CD4-positive, alpha-beta T cell (primary cell): ENCODE measurements at regions of chr6 and their contacts with region 1.

Region 1: DNA sequence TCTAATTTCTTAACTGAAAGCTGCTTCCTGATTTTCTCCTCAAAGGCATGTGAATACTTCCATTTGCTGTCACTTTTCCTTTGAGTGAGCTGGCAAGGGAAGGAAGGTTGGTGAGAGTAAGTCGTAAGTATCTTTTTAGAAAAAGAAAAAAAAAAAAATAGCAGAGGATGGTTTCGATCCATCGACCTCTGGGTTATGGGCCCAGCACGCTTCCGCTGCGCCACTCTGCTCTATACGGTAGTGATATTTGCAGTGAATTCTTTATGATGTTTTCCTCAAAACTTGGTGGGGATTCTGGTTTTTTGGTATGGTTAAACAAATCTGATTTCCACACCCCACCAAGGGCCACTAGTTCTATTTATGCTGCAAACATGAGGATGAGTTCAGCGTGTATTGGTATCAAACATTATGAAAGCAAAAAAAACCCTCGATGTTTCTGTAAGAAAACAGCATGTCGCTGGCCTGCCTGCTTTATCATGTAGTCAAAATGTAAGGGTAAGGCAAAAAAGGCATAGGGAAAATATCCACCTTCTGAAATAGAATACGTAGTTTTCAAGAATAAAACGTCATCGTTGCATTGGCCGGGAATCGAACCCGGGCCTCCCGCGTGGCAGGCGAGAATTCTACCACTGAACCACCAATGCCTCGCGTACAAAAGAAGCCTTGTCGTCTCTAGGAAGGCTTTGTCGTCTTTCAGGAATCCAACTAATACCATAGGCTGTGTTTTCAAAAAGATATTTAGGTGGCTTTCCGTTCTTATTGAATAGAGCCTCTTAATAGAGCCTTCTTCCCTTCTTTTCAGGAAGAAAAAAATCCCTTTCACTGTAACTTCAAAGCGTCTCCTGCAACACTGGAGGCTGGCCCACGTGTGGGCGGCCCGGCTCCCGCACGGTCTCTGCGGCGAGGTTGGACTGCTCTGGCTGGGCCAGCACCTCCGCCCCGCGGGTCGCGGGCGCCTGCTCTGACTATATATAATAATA is 9.6 kb downstream of the OR2B2 start:
- DNase-seq: peak; percentile 78 to 95 (median 88)
- ATAC-seq: peak; percentile 86
- H3K4me3 ChIP-seq: peak overlapping the region; percentile 60
- H3K4me3 Mint-ChIP-seq: peak overlapping the region; percentile 98
- H3K27ac ChIP-seq: peak overlapping the region; percentile 71 to 72
- H3K27ac Mint-ChIP-seq: peak overlapping the region; percentile 100
- H3K4me1 ChIP-seq: peaks cover 7% of the 10 kb centered on the region
- H3K4me1 Mint-ChIP-seq: peaks cover 16% of the 10 kb centered on the region
- H3K27me3 ChIP-seq: no peaks in the 10 kb centered on the region
- H3K27me3 Mint-ChIP-seq: peaks cover 23% of the 10 kb centered on the region
- CTCF ChIP-seq: no peak

Region 2: DNA sequence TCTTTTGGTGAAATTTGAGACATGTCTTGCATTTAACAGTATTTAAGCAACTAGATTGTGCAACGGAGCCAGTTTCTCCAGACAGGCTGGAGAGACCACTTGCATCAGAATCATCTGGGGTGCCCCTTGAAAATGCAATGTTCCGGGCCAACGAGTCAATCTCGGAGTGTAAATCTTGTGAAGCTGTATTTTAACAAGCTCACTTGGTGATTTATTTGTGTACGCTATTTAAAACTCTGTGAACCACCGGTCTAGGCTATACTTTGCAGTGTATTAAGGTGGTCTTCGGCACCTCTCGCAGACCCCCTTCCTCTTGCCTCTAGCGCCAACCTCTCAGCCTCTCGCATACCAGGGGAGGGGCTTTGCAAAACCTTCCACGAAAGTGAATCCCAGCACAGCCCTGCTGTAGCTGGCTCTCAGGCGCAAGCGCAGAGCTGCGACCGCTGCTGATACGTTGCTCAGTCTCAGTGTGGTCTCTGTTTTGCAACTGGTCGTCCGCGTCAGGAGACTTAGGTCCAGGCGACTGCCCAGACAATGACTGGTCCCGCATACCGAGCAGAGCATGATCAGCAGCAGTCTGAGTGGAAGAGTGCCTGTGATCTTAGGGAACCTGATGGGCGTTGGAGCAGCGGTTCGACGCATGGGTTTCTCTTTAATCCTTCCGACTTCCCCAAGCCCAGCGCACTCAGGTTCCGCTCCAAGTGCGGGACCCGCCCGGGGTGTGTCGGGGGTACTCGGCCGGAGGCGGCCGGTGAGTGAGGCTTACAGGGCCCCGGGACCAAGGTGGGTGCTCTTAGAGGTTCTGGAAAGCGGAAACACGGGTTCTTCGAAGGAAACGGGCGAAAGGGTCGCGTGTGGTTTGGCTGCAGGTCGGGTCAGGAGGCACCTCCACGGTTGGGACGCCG is 514.1 kb before region 1 on chr6 and contains the start of gene ZNF391:
- CTCF ChIA-PET with region 1: no interaction called
- POLR2A ChIA-PET with region 1: no interaction called
- intact Hi-C with region 1: loop called in 1 of 2 experiments (anchors 5 kb)
- DNase-seq: peak; percentile 41 to 80 (median 58)
- ATAC-seq: peak; percentile 87
- H3K4me3 ChIP-seq: peak within 1 kb of the TSS; percentile 78
- H3K4me3 Mint-ChIP-seq: peak within 1 kb of the TSS; percentile 98
- H3K27ac ChIP-seq: no peak within 1 kb of the TSS
- H3K27ac Mint-ChIP-seq: peak within 1 kb of the TSS; percentile 90
- H3K4me1 ChIP-seq: peaks cover 13% of the 10 kb centered on the region
- H3K4me1 Mint-ChIP-seq: peaks cover 24% of the 10 kb centered on the region
- H3K27me3 ChIP-seq: no peaks in the 10 kb centered on the region
- H3K27me3 Mint-ChIP-seq: peaks cover 2% of the 10 kb centered on the region
- CTCF ChIP-seq: no peak
- total RNA-seq, gene ZNF391: 1.6 to 1.8 TPM

Region 3: GRCh38 chr6:27518881-27519795 is 383.5 kb before region 1 on chr6:
- CTCF ChIA-PET with region 1: no interaction called
- POLR2A ChIA-PET with region 1: no interaction called
- intact Hi-C with region 1: loop called (anchors 2 kb)
- DNase-seq: peak; percentile 33 to 89 (median 54)
- ATAC-seq: peak; percentile 84
- H3K4me3 ChIP-seq: peak overlapping the region; percentile 92
- H3K4me3 Mint-ChIP-seq: peak overlapping the region; percentile 91
- H3K27ac ChIP-seq: peak overlapping the region; percentile 17 to 76
- H3K27ac Mint-ChIP-seq: peak overlapping the region; percentile 89
- H3K4me1 ChIP-seq: peaks cover 12% of the 10 kb centered on the region
- H3K4me1 Mint-ChIP-seq: peaks cover 31% of the 10 kb centered on the region
- H3K27me3 ChIP-seq: peaks cover 7% of the 10 kb centered on the region in 2 experiments
- H3K27me3 Mint-ChIP-seq: peaks cover 28% of the 10 kb centered on the region
- CTCF ChIP-seq: peak; percentile 78

Region 4: DNA sequence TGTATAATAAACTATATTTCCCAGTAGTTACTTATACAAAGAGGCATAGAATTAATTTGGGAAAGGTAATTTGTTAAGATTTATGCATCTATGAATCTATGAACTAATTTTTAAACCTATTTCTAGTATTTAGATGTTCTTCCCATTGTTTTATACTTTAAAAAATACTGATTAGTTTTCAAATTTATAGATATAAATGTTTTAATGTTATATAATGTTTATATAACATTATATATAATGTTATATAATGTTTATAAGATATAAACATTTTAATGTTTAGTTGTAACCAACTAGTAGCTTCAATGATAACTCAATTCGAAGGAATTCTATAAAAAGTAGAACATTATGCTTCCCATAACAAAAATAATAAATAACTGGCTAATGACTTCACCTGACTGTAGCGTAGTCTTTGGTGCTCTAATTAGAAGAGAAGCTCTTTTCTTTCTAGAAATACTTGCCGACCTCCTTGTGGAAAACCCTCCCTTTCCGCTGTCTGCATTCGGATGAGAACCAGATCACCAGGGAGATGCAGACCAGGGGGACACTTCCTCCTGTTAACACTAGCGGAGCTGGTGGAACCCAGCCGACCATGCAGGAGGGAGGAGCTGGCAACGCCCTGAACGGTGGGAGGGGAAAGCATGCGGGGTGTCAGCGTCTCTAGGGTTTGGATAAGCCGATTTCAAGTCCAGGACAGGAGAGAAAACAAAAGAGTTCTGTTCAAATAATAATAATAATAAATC is 148.8 kb before region 1 on chr6:
- CTCF ChIA-PET with region 1: no interaction called
- POLR2A ChIA-PET with region 1: no interaction called
- intact Hi-C with region 1: loop called in 1 of 2 experiments (anchors 5 kb)
- DNase-seq: peak; percentile 31 to 81 (median 54)
- ATAC-seq: peak; percentile 11
- H3K4me3 ChIP-seq: peak overlapping the region; percentile 71
- H3K4me3 Mint-ChIP-seq: peak overlapping the region; percentile 97
- H3K27ac ChIP-seq: no peak overlapping the region
- H3K27ac Mint-ChIP-seq: peak overlapping the region; percentile 98
- H3K4me1 ChIP-seq: peaks cover 22% of the 10 kb centered on the region
- H3K4me1 Mint-ChIP-seq: peaks cover 41% of the 10 kb centered on the region
- H3K27me3 ChIP-seq: no peaks in the 10 kb centered on the region
- H3K27me3 Mint-ChIP-seq: peaks cover 10% of the 10 kb centered on the region
- CTCF ChIP-seq: no peak

Region 5: GRCh38 chr6:28136585-28137504 is 234.2 kb after region 1 on chr6:
- CTCF ChIA-PET with region 1: no interaction called
- POLR2A ChIA-PET with region 1: no interaction called
- intact Hi-C with region 1: loop called in 1 of 2 experiments (anchors 10 kb)
- DNase-seq: peak; percentile 47 to 87 (median 68)
- ATAC-seq: peak; percentile 42
- H3K4me3 ChIP-seq: peak overlapping the region; percentile 79
- H3K4me3 Mint-ChIP-seq: peak overlapping the region; percentile 95
- H3K27ac ChIP-seq: peak overlapping the region; percentile 93 to 99
- H3K27ac Mint-ChIP-seq: peak overlapping the region; percentile 95
- H3K4me1 ChIP-seq: peaks cover 37% of the 10 kb centered on the region
- H3K4me1 Mint-ChIP-seq: peaks cover 76% of the 10 kb centered on the region
- H3K27me3 ChIP-seq: no peaks in the 10 kb centered on the region
- H3K27me3 Mint-ChIP-seq: no peaks in the 10 kb centered on the region
- CTCF ChIP-seq: no peak

Region 6: DNA sequence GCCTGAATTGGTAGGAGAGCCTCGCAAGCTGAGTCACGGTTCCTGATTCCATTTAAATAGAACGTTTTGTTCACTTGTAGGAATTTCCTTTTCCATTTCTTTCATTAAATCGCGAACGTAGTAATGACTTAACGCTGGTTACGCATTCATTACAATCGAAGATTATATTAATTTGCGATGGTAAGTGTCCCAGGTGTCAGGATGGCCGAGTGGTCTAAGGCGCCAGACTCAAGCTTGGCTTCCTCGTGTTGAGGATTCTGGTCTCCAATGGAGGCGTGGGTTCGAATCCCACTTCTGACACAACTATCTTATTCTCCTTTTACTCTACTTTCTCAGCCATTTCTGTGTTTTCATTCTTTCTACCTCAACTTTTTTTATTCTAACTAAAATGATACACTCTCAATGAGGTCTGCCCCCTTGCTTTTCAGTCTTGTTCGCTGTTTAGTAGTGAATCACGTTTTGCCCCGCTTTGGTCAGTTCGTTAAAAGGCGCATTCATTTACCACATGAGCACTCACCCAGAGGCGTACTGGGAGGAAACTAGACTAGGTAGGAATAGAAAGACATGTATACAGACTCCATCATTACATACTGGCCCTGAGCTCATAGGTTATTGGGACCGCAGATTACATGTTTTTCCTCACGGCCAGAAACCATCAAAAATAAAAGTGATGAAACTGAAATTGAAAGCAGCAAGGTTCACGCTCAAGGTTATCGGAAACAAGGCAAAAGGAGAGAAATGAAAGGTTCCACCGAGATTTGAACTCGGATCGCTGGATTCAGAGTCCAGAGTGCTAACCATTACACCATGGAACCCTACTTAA is 1038.4 kb after region 1 on chr6:
- CTCF ChIA-PET with region 1: no interaction called
- POLR2A ChIA-PET with region 1: no interaction called
- intact Hi-C with region 1: loop called in 1 of 2 experiments (anchors 5 kb)
- DNase-seq: peak; percentile 49 to 93 (median 67)
- ATAC-seq: peak; percentile 68
- H3K4me3 ChIP-seq: peak overlapping the region; percentile 66
- H3K4me3 Mint-ChIP-seq: peak overlapping the region; percentile 92
- H3K27ac ChIP-seq: peak overlapping the region; percentile 55 to 63
- H3K27ac Mint-ChIP-seq: peak overlapping the region; percentile 92
- H3K4me1 ChIP-seq: peaks cover 42% of the 10 kb centered on the region
- H3K4me1 Mint-ChIP-seq: peaks cover 55% of the 10 kb centered on the region
- H3K27me3 ChIP-seq: no peaks in the 10 kb centered on the region
- H3K27me3 Mint-ChIP-seq: peaks cover 21% of the 10 kb centered on the region
- CTCF ChIP-seq: no peak